Activated CD4-positive, alpha-beta T cell treated with anti-CD3 and anti-CD28 coated beads, Interleukin-2, amount 10 ng/mL, durations not matched to agents 24 days and 14 days (primary cell): ENCODE measurements at regions of chr2 and their contacts with region 1.

Region 1: GRCh38 chr2:221573430-221574230 is 1.5 kb upstream of the EPHA4 start:
- DNase-seq: peak; percentile 95
- H3K4me3 Mint-ChIP-seq: peak overlapping the region; percentile 86
- H3K27ac Mint-ChIP-seq: peak overlapping the region; percentile 29
- H3K4me1 Mint-ChIP-seq: peaks cover 28% of the 10 kb centered on the region
- H3K27me3 Mint-ChIP-seq: peaks cover 62% of the 10 kb centered on the region

Region 2: GRCh38 chr2:219736209-219736608 is 1837.4 kb before region 1 on chr2:
- intact Hi-C with region 1: loop called (anchors 10 kb)
- DNase-seq: no peak
- H3K4me3 Mint-ChIP-seq: no peak overlapping the region
- H3K27ac Mint-ChIP-seq: no peak overlapping the region
- H3K4me1 Mint-ChIP-seq: no peaks in the 10 kb centered on the region
- H3K27me3 Mint-ChIP-seq: peaks cover 7% of the 10 kb centered on the region

Region 3: GRCh38 chr2:221318376-221319130 is 255.1 kb before region 1 on chr2:
- intact Hi-C with region 1: loop called (anchors 10 kb)
- DNase-seq: no peak
- H3K4me3 Mint-ChIP-seq: no peak overlapping the region
- H3K27ac Mint-ChIP-seq: no peak overlapping the region
- H3K4me1 Mint-ChIP-seq: no peaks in the 10 kb centered on the region
- H3K27me3 Mint-ChIP-seq: peaks cover 4% of the 10 kb centered on the region

Region 4: GRCh38 chr2:221454191-221455105 is 119.2 kb before region 1 on chr2:
- intact Hi-C with region 1: loop called (anchors 5 kb)
- DNase-seq: no peak
- H3K4me3 Mint-ChIP-seq: no peak overlapping the region
- H3K27ac Mint-ChIP-seq: no peak overlapping the region
- H3K4me1 Mint-ChIP-seq: peaks cover 5% of the 10 kb centered on the region
- H3K27me3 Mint-ChIP-seq: peaks cover 3% of the 10 kb centered on the region

Region 5: GRCh38 chr2:221517696-221518151 is 55.9 kb before region 1 on chr2:
- intact Hi-C with region 1: loop called (anchors 1 kb)
- DNase-seq: peak; percentile 93
- H3K4me3 Mint-ChIP-seq: no peak overlapping the region
- H3K27ac Mint-ChIP-seq: no peak overlapping the region
- H3K4me1 Mint-ChIP-seq: no peaks in the 10 kb centered on the region
- H3K27me3 Mint-ChIP-seq: no peaks in the 10 kb centered on the region